AG04449 (cell line): ENCODE measurements at regions of chr12 and their contacts with region 1.

Region 1: DNA sequence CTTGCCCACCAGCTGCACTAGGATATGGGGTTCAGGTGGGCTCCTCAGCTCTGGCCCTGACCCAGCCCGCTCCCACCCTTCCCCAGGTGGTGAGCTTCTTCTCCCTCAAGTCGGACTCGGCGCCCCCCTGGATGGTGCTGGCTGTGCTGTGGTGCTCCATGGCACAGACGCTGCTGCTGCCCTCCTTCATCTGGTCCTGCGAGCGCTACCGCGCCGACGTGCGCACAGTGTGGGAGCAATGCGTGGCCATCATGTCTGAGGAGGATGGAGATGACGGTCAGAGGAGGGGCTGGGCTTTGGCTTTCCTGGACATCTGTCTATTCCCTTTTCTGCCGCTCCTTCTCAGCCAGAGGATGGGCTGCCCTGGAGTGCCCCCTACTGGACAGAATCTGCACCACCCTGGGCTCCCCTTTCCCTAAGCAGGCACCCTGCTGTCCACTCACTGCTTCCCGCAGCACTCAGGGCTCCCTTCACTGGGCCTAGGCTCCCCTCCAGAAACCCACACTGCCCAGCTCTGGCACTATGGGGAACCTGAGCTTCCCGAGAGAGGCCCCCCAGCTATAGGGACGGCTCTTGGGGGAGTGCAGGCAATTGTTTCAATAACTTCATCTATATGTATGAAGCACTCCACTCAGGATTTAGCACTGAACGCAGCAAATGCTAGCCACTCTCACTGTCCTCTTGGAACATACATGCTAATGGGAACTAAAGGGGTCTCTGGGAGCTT is 2.6 kb upstream of the P3H3 start:
- DNase-seq: peak; percentile 26
- H3K4me3 ChIP-seq: peak overlapping the region; percentile 48
- CTCF ChIP-seq: peak; percentile 90

Region 2: GRCh38 chr12:6723607-6724396 is 101.8 kb before region 1 on chr12 and contains the start of gene COPS7A:
- CTCF ChIA-PET with region 1: interaction called, 82 read pairs
- POLR2A ChIA-PET with region 1: interaction called, 5 read pairs
- DNase-seq: peak; percentile 84
- H3K4me3 ChIP-seq: peak within 1 kb of the TSS; percentile 56
- CTCF ChIP-seq: no peak

Region 3: GRCh38 chr12:6758506-6759095 is 67.0 kb before region 1 on chr12:
- CTCF ChIA-PET with region 1: interaction called, 304 read pairs
- POLR2A ChIA-PET with region 1: interaction called, 24 read pairs
- DNase-seq: no peak
- H3K4me3 ChIP-seq: no peak overlapping the region
- CTCF ChIP-seq: no peak

Region 4: GRCh38 chr12:6778574-6779550 is 46.7 kb before region 1 on chr12:
- CTCF ChIA-PET with region 1: interaction called, 60 read pairs
- POLR2A ChIA-PET with region 1: no interaction called
- DNase-seq: peak; percentile 53
- H3K4me3 ChIP-seq: peak overlapping the region; percentile 54
- CTCF ChIP-seq: peak; percentile 98

Region 5: GRCh38 chr12:6807170-6807569 is 18.4 kb before region 1 on chr12:
- CTCF ChIA-PET with region 1: interaction called, 37 read pairs
- POLR2A ChIA-PET with region 1: no interaction called
- DNase-seq: no peak
- H3K4me3 ChIP-seq: no peak overlapping the region
- CTCF ChIP-seq: no peak

Region 6: GRCh38 chr12:6851921-6852650 is 26.5 kb after region 1 on chr12 and contains the start of gene USP5:
- CTCF ChIA-PET with region 1: interaction called, 316 read pairs
- POLR2A ChIA-PET with region 1: interaction called, 19 read pairs
- DNase-seq: peak; percentile 97
- H3K4me3 ChIP-seq: peak within 1 kb of the TSS; percentile 98
- CTCF ChIP-seq: no peak